Dendritic cell treated with granulocyte-macrophage colony-stimulating factor and Interleukin-4, amounts not matched to agents 40 ng/mL and 50 ng/mL, for 4 days (primary cell): ENCODE measurements at regions of chr12 and their contacts with region 1.

Region 1: GRCh38 chr12:4526923-4527546 is 11.7 kb upstream of the RAD51AP1 start:
- H3K4me3 Mint-ChIP-seq: no peak overlapping the region
- H3K27ac Mint-ChIP-seq: no peak overlapping the region
- H3K4me1 Mint-ChIP-seq: peaks cover 6% of the 10 kb centered on the region
- H3K27me3 Mint-ChIP-seq: no peaks in the 10 kb centered on the region

Region 2: DNA sequence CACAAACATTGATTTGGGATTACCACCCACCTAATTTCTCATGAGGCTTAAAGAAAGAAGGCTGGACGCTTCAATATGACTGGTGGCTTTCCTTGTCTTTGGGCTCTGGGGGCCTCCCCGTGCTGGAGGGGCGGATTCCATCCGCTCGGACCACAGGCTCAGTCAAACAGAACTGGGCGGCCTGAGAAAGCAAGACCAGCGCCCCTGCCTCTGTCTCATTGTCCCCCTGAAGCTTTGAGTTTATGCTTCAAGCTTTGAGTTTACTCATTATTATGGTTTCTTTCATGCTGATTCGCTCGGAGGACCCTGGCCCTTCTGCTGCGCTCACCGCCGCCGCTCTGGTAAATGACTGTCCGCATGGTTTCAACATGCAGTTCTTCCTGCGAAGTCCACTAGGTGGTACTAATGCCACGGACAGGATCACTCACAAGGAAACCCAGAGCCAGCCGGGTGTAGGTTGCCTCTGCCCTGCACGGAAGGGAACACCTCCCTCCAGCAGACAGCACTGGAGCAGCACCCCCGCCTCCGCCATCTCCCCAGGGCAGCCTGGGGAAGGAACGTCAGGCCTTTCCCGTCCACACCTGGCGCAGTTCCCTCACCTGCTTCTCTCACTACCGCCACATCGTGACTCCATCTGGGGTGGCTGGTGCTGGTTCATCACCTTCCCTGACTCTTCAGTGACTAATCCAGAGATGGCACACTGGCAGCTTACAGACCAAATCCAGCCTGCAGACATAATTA is 219.3 kb before region 1 on chr12:
- intact Hi-C with region 1: loop called (anchors 10 kb)
- H3K4me3 Mint-ChIP-seq: no peak overlapping the region
- H3K27ac Mint-ChIP-seq: no peak overlapping the region
- H3K4me1 Mint-ChIP-seq: peaks cover 6% of the 10 kb centered on the region
- H3K27me3 Mint-ChIP-seq: no peaks in the 10 kb centered on the region

Region 3: DNA sequence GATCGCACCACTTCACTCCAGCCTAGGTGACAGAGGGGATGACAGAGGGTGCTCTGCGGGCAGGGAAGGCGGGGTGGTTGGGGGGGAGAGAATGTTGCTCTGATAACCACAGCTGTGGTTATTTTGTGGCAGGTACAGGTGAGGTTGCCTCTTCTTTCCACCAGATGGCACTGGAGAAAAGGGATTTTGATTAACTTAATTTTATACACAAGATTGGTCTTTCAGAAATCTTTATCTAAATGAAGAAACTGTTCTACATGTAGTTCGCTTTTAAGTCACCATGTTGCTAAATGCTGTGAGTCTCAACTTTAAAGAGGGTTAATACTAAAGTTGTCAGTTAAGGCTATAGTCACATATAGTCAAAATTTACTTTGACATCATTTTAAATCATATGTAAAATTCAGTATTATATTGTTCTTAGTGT is 173.2 kb before region 1 on chr12:
- intact Hi-C with region 1: loop called (anchors 5 kb)
- H3K4me3 Mint-ChIP-seq: no peak overlapping the region
- H3K27ac Mint-ChIP-seq: no peak overlapping the region
- H3K4me1 Mint-ChIP-seq: peaks cover 4% of the 10 kb centered on the region
- H3K27me3 Mint-ChIP-seq: no peaks in the 10 kb centered on the region

Region 4: DNA sequence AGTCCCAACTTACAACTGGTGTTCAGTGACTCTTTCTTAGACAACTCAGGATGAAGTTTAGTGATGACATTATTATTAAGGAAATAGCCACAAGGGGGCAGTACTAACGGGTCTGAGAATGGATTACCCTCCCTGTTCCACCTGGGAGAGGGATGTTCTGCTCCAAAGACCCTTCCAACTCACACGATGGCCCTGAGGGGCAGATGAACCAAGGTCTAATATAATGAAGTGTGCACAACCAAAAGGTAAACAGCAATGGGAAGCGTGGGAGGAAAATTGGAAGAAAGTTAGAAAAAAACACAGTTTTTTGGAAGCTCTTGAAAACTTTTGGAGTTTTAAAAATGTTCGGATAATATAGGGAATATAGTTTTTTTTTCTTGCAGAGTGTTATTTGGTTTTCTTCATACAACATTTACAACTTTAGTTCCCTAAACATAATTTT is 105.4 kb before region 1 on chr12:
- intact Hi-C with region 1: loop called (anchors 1 kb)
- H3K4me3 Mint-ChIP-seq: no peak overlapping the region
- H3K27ac Mint-ChIP-seq: no peak overlapping the region
- H3K4me1 Mint-ChIP-seq: peaks cover 29% of the 10 kb centered on the region
- H3K27me3 Mint-ChIP-seq: peaks cover 14% of the 10 kb centered on the region

Region 5: GRCh38 chr12:5230156-5230555 is 703.1 kb after region 1 on chr12:
- intact Hi-C with region 1: no loop called
- H3K4me3 Mint-ChIP-seq: no peak overlapping the region
- H3K27ac Mint-ChIP-seq: no peak overlapping the region
- H3K4me1 Mint-ChIP-seq: no peaks in the 10 kb centered on the region
- H3K27me3 Mint-ChIP-seq: no peaks in the 10 kb centered on the region